Thyroid gland (tissue), 4 donors: ENCODE measurements at regions of chr12 and their contacts with region 1.

Region 1: GRCh38 chr12:75722714-75723200 is 211.3 kb upstream of the KRR1 start:
- DNase-seq: peak; percentile 59 to 66
- H3K4me3 ChIP-seq: no peak overlapping the region
- H3K27ac ChIP-seq: peak overlapping the region; percentile 56 to 77 (median 67)
- H3K4me1 ChIP-seq: peaks cover 56 to 85% of the 10 kb centered on the region in 2 donors
- H3K27me3 ChIP-seq: no peaks in the 10 kb centered on the region
- CTCF ChIP-seq: no peak
- POLR2A ChIP-seq: no peak

Region 2: GRCh38 chr12:75190846-75191245 is 531.9 kb before region 1 on chr12:
- intact Hi-C with region 1: no loop called
- DNase-seq: no peak
- H3K4me3 ChIP-seq: no peak overlapping the region
- H3K27ac ChIP-seq: no peak overlapping the region
- H3K4me1 ChIP-seq: no peaks in the 10 kb centered on the region
- H3K27me3 ChIP-seq: no peaks in the 10 kb centered on the region
- CTCF ChIP-seq: no peak
- POLR2A ChIP-seq: no peak

Region 3: GRCh38 chr12:76020731-76021672 is 298.2 kb after region 1 on chr12:
- intact Hi-C with region 1: loop called (anchors 10 kb)
- DNase-seq: peak in 1 of 2 donors; percentile 33
- H3K4me3 ChIP-seq: no peak overlapping the region
- H3K27ac ChIP-seq: peak overlapping the region; percentile 86 to 98 (median 93)
- H3K4me1 ChIP-seq: peaks cover 32 to 41% of the 10 kb centered on the region in 2 donors
- H3K27me3 ChIP-seq: no peaks in the 10 kb centered on the region
- CTCF ChIP-seq: no peak
- POLR2A ChIP-seq: no peak